PC-3 (cell line): ENCODE measurements at regions of chr1 and their contacts with region 1.

Region 1: GRCh38 chr1:16009030-16009709 is 5.1 kb downstream of the SRARP start:
- DNase-seq: peak; percentile 83
- ATAC-seq: peak; percentile 75
- H3K4me3 ChIP-seq: no peak overlapping the region
- H3K27ac ChIP-seq: no peak overlapping the region
- H3K4me1 ChIP-seq: peaks cover 12% of the 10 kb centered on the region
- H3K27me3 ChIP-seq: no peaks in the 10 kb centered on the region
- CTCF ChIP-seq: peak; percentile 98

Region 2: GRCh38 chr1:15916417-15916816 is 92.8 kb before region 1 on chr1:
- CTCF ChIA-PET with region 1: no interaction called
- POLR2A ChIA-PET with region 1: no interaction called
- intact Hi-C with region 1: no loop called
- DNase-seq: peak; percentile 56
- ATAC-seq: peak; percentile 69
- H3K4me3 ChIP-seq: no peak overlapping the region
- H3K27ac ChIP-seq: peak overlapping the region; percentile 54
- H3K4me1 ChIP-seq: peaks cover 33% of the 10 kb centered on the region
- H3K27me3 ChIP-seq: no peaks in the 10 kb centered on the region
- CTCF ChIP-seq: no peak

Region 3: DNA sequence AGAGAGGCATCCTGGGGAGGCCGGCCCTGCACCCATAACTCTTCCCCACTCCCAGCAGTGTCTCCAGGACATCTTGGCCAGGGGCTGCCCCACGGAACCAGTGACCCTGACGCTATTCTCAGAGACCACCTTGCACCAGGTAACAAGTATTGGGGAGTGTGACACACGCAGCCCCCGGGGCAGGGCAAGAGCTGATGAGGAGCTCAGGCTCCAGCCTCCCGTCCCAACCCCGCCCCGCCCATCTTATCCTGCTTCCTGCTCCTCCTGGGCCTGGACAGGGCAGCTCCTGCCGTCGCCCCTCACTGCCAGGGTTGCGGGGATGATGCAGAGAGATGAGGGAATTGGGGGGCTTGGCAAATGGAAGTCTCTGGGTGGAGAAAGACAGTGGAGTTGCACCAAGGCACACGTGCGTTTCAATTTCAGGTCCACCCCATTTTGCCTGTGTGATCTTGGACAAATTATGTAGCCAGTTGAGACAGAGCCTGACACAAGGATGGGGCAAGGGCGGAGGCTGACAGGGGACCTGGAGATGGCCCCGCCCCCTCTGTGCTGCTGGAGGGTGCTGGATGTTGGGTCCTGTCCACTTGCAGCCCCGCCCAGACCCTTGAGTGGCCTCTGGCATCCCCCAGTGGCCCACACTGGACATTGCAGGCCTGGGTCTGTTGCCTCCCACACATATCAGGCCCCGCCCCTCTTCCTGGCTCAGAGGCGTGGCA is 23.4 kb after region 1 on chr1:
- CTCF ChIA-PET with region 1: no interaction called
- POLR2A ChIA-PET with region 1: no interaction called
- intact Hi-C with region 1: loop called (anchors 1 kb)
- DNase-seq: peak; percentile 85
- ATAC-seq: peak; percentile 94
- H3K4me3 ChIP-seq: no peak overlapping the region
- H3K27ac ChIP-seq: no peak overlapping the region
- H3K4me1 ChIP-seq: no peaks in the 10 kb centered on the region
- H3K27me3 ChIP-seq: no peaks in the 10 kb centered on the region
- CTCF ChIP-seq: peak; percentile 77

Region 4: GRCh38 chr1:16055613-16056520 is 46.7 kb after region 1 on chr1:
- CTCF ChIA-PET with region 1: no interaction called
- POLR2A ChIA-PET with region 1: no interaction called
- intact Hi-C with region 1: loop called (anchors 1 kb)
- DNase-seq: peak; percentile 95
- ATAC-seq: peak; percentile 94
- H3K4me3 ChIP-seq: no peak overlapping the region
- H3K27ac ChIP-seq: no peak overlapping the region
- H3K4me1 ChIP-seq: peaks cover 5% of the 10 kb centered on the region
- H3K27me3 ChIP-seq: no peaks in the 10 kb centered on the region
- CTCF ChIP-seq: peak; percentile 85

Region 5: DNA sequence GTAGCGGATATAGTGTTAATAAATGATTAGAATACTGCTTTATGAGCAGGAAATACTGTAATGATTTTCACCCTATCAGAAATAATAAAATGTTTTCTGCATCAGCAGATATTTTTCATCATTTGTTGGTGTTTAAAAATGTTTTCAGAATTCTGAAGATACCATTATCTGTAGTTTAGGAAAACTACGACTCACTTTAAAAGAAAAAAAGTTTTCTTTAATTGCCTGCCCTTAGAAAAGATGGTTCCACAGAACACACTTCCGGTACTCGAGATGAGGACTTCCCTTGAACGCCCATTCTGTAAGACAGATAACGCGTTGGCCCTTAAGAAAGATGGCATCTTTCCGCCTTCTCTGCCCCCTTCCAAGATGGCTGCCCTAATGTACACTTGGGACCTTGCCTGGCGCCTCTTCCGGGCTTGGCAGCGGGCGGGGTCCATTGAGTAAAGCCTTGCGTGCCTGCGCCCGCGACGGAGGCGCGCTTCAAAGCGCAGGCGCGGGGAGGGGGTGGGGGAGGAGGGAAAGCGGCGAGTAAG is 357.6 kb after region 1 on chr1 and contains the start of gene SZRD1:
- CTCF ChIA-PET with region 1: no interaction called
- POLR2A ChIA-PET with region 1: no interaction called
- intact Hi-C with region 1: no loop called
- DNase-seq: peak; percentile 98
- ATAC-seq: peak; percentile 76
- H3K4me3 ChIP-seq: peak within 1 kb of the TSS; percentile 79
- H3K27ac ChIP-seq: peak within 1 kb of the TSS; percentile 78
- H3K4me1 ChIP-seq: peaks cover 12% of the 10 kb centered on the region
- H3K27me3 ChIP-seq: no peaks in the 10 kb centered on the region
- CTCF ChIP-seq: no peak
- total RNA-seq, gene SZRD1: 119 and 136 TPM in 2 replicates